Caco-2 (cell line): ENCODE measurements at regions of chr2 and their contacts with region 1.

Region 1: GRCh38 chr2:69601179-69601612 is 42.3 kb downstream of the AAK1 start:
- DNase-seq: peak; percentile 77 to 81
- H3K4me3 ChIP-seq: no peak overlapping the region
- H3K4me3 Mint-ChIP-seq: peak overlapping the region; percentile 42
- H3K27ac Mint-ChIP-seq: peak overlapping the region; percentile 82
- H3K4me1 ChIP-seq: peaks cover 43% of the 10 kb centered on the region
- H3K4me1 Mint-ChIP-seq: peaks cover 41% of the 10 kb centered on the region
- H3K27me3 ChIP-seq: no peaks in the 10 kb centered on the region
- H3K27me3 Mint-ChIP-seq: no peaks in the 10 kb centered on the region
- CTCF ChIP-seq: no peak

Region 2: GRCh38 chr2:69577467-69578197 is 23.6 kb before region 1 on chr2:
- CTCF ChIA-PET with region 1: no interaction called
- POLR2A ChIA-PET with region 1: no interaction called
- intact Hi-C with region 1: no loop called
- DNase-seq: no peak
- H3K4me3 ChIP-seq: no peak overlapping the region
- H3K4me3 Mint-ChIP-seq: no peak overlapping the region
- H3K27ac Mint-ChIP-seq: no peak overlapping the region
- H3K4me1 ChIP-seq: peaks cover 17% of the 10 kb centered on the region
- H3K4me1 Mint-ChIP-seq: peaks cover 37% of the 10 kb centered on the region
- H3K27me3 ChIP-seq: no peaks in the 10 kb centered on the region
- H3K27me3 Mint-ChIP-seq: no peaks in the 10 kb centered on the region
- CTCF ChIP-seq: no peak

Region 3: DNA sequence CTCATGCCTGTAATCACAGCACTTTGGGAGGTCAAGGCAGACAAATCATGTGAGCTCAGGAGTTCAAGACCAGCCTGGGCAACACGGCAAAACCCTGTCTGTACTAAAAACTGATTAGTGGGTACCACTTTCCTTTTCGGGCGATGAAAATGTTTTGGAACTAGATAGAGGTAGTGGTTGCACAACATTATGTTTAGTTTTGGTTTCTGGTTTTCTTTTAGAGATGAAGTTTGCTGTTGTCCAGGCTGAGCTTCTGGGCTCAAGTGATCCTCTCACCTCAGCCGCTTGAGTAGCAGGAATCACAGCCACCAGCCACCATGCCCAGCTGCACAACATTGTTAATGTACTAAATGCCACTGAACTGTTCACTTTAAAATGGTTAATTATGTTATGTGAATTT is 14.8 kb after region 1 on chr2:
- CTCF ChIA-PET with region 1: no interaction called
- POLR2A ChIA-PET with region 1: interaction called, 3 read pairs
- intact Hi-C with region 1: loop called (anchors 1 kb)
- DNase-seq: no peak
- H3K4me3 ChIP-seq: no peak overlapping the region
- H3K4me3 Mint-ChIP-seq: no peak overlapping the region
- H3K27ac Mint-ChIP-seq: no peak overlapping the region
- H3K4me1 ChIP-seq: peaks cover 33% of the 10 kb centered on the region
- H3K4me1 Mint-ChIP-seq: peaks cover 15% of the 10 kb centered on the region
- H3K27me3 ChIP-seq: no peaks in the 10 kb centered on the region
- H3K27me3 Mint-ChIP-seq: no peaks in the 10 kb centered on the region
- CTCF ChIP-seq: no peak

Region 4: DNA sequence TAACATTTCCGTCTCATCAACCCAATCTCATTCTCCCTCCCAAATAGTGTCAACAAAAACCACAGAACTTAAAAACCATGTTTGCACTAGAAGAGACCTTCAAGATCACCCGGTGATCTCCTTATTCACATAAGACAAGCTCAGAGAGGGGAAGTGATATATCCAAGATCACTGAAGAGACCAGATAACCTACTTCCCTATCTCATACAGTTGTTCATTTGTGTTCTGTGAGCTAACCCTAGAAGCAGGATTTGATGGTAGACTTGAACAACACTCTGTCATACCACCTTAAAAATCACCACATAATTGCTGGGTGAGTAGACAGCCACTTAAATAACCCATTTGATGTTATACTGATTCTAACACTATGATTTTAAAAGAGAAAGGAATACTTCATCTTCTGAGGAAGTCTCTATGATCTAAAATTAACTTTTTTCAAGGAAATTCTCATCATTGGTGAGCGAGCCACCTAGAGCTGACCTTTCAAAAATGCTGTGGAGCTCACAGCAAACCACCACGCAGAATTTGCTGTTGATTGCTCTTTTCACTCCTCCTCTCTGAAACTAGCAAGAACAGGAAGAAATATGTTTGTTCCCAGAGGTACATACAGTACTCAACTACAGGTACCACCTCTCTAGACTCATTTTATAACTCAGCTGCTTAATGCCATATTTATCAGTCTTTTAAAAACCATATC is 27.3 kb after region 1 on chr2:
- CTCF ChIA-PET with region 1: no interaction called
- POLR2A ChIA-PET with region 1: no interaction called
- intact Hi-C with region 1: no loop called
- DNase-seq: no peak
- H3K4me3 ChIP-seq: no peak overlapping the region
- H3K4me3 Mint-ChIP-seq: no peak overlapping the region
- H3K27ac Mint-ChIP-seq: no peak overlapping the region
- H3K4me1 ChIP-seq: peaks cover 19% of the 10 kb centered on the region
- H3K4me1 Mint-ChIP-seq: peaks cover 5% of the 10 kb centered on the region
- H3K27me3 ChIP-seq: no peaks in the 10 kb centered on the region
- H3K27me3 Mint-ChIP-seq: no peaks in the 10 kb centered on the region
- CTCF ChIP-seq: no peak

Region 5: GRCh38 chr2:69694894-69695849 is 94.0 kb after region 1 on chr2:
- CTCF ChIA-PET with region 1: no interaction called
- POLR2A ChIA-PET with region 1: no interaction called
- intact Hi-C with region 1: loop called (anchors 5 kb)
- DNase-seq: peak in 1 of 2 experiments; percentile 31
- H3K4me3 ChIP-seq: no peak overlapping the region
- H3K4me3 Mint-ChIP-seq: peak overlapping the region; percentile 28
- H3K27ac Mint-ChIP-seq: no peak overlapping the region
- H3K4me1 ChIP-seq: peaks cover 17% of the 10 kb centered on the region; the same call in 1 of the 2 replicates
- H3K4me1 Mint-ChIP-seq: peaks cover 13% of the 10 kb centered on the region
- H3K27me3 ChIP-seq: no peaks in the 10 kb centered on the region
- H3K27me3 Mint-ChIP-seq: no peaks in the 10 kb centered on the region
- CTCF ChIP-seq: no peak